ENCODE measurements at regions of chr17 and their contacts with region 1.

Region 1: DNA sequence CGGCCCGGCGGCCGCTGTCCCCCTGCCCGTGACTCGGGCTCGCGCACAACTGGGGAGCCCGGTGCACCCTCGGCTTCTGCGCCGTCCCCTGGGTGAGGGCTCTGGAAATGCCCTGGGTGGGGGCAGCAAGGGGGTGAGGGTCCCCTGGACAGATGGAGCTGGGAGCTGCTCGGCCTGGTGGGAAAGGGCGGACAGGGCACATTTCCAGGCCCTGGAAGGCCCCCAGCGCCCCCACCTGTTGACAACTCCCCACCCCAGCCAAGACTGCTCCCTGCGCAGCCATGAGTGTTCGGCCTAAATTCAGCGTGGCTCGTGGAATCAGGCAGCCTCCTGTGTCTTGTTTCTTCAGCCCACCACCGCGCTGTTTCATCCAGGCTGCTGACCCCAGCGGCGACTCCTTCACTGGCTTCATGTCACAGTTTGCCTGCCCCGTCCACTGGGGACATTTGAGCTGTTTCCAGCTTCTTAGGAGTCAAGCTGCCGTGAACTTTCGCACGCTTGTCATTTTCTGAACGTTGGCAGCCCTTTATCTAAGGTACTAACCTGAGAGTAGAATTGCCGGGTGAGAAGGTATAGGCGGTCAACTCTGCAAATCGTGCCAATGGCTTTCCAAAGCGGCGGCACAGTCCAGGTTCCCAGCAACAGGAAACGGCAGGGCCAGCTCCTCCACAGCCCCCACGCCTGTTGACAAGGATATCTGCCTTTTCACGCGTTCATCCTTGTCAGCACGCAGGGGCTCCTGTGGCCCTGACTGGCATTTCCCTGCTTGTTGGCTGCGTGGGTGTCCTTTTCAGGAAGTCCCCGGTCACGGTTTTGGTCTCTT is 895 bp downstream of the UTS2R start:
- DNase-seq: no peak
- H3K4me3 ChIP-seq: peak overlapping the region in 1 of 3 donors; percentile 58
- H3K27ac ChIP-seq: no peak overlapping the region
- H3K4me1 ChIP-seq: peaks cover 7 to 10% of the 10 kb centered on the region in 2 donors
- H3K27me3 ChIP-seq: peaks cover 12 to 64% of the 10 kb centered on the region in 2 donors
- CTCF ChIP-seq: no peak
- POLR2A ChIP-seq: no peak

Region 2: DNA sequence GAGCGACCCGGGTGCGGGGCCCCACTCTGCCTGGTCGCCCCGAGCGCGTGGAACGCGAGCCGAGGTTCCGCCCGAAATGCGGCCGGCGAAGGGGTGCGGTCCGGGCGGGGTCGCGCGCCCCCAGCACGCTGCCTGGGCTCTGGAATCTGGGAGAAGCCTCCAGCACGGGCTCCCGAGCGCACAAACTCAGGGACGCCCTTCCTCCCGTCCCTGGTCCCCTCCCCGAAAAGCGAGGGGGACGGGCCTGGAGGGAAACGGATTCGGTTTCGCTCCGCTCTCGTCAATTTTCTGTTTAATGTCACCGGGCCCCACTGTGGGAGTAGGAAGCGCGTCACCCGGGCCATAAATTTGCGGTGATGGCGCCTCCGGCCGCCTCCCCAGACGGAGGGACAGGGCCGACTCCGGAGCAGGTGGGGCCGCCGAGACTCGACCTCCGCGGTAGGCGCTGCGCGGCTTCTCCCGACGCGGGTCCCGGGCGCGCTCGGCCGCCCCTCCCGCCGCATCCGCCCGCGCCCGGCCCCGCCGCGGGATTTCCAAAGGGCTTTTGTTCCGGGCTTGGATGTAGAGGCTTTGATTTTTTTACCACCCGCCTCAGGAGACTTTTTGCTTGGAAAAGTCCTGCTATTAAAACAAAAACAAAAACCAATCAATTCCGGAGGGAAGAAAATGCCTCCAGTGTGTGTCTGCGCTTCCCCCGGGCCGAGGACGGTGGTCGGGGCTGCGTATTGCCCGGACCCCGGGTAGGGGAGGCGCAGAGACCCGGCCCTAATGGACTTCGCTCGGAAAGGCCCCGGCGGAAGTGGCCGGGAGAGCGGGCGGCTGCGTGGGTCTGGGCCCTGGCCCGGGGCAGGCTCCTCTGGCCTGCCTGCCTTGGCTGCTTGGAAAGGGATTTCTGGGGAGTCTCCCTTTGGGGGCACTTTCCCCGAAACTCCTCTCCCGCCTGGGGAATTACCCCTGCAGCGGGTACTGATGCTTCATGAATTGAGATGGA is 985.1 kb before region 1 on chr17:
- intact Hi-C with region 1: no loop called
- DNase-seq: no peak
- H3K4me3 ChIP-seq: peak overlapping the region; percentile 75 to 94 (median 87)
- H3K27ac ChIP-seq: peak overlapping the region; percentile 94 to 96
- H3K4me1 ChIP-seq: peaks cover 5 to 6% of the 10 kb centered on the region in 2 donors
- H3K27me3 ChIP-seq: no peaks in the 10 kb centered on the region
- CTCF ChIP-seq: no peak
- POLR2A ChIP-seq: peak; percentile 12

Region 3: DNA sequence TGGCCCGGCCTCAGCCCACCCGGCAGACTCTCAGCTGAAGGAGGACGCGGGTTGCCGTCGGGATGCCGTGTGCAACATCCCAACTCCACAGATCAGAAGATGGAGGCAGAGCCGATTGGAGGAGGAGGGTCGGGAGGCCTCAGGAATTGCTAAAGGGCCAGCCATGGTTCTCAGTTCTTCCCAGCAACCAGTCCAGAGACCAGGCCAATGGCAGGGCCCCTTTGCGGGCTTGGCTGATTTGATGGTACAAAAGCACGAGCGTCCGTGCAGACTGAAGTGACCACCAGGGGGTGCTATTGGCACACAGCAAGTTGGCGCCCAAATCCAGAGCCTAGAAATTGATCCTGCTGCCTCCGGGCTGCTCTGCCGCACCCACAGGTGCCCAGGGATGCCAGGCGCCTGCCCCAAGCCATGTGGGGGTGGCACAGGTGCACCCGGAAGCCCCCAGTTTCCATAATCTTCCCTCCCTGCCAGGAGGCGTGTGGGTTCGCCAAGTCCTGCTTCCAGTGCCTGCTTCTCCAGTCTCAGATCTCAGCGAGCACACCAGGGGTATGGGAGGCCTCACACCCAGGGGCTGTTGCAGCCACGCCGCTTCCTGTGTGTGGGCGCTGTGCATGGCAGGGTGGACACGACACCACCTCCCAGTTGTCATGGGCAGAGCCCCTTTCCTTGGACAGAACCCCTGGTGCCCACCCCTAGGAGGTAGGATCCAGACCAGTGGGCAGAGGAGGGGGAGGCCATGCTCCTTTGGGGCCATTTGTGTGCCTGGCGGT is 20.6 kb before region 1 on chr17:
- intact Hi-C with region 1: loop called (anchors 1 kb)
- DNase-seq: peak; percentile 73 to 82
- H3K4me3 ChIP-seq: peak overlapping the region in 1 of 3 donors; percentile 32
- H3K27ac ChIP-seq: no peak overlapping the region
- H3K4me1 ChIP-seq: peaks cover 0 to 11% of the 10 kb centered on the region in 2 donors
- H3K27me3 ChIP-seq: no peaks in the 10 kb centered on the region
- CTCF ChIP-seq: peak; percentile 92 to 97 (median 95)
- POLR2A ChIP-seq: no peak

Region 4: GRCh38 chr17:82384730-82385481 is 12.4 kb after region 1 on chr17:
- intact Hi-C with region 1: no loop called
- DNase-seq: peak; percentile 87
- H3K4me3 ChIP-seq: peak overlapping the region in 1 of 3 donors; percentile 11
- H3K27ac ChIP-seq: peak overlapping the region; percentile 30 to 61
- H3K4me1 ChIP-seq: peaks cover 0 to 16% of the 10 kb centered on the region in 2 donors
- H3K27me3 ChIP-seq: peaks cover 0 to 34% of the 10 kb centered on the region in 2 donors
- CTCF ChIP-seq: peak in 2 of 3 donors; percentile 49 to 52
- POLR2A ChIP-seq: no peak